ENCODE measurements at regions of chr12 and their contacts with region 1.

Region 1: DNA sequence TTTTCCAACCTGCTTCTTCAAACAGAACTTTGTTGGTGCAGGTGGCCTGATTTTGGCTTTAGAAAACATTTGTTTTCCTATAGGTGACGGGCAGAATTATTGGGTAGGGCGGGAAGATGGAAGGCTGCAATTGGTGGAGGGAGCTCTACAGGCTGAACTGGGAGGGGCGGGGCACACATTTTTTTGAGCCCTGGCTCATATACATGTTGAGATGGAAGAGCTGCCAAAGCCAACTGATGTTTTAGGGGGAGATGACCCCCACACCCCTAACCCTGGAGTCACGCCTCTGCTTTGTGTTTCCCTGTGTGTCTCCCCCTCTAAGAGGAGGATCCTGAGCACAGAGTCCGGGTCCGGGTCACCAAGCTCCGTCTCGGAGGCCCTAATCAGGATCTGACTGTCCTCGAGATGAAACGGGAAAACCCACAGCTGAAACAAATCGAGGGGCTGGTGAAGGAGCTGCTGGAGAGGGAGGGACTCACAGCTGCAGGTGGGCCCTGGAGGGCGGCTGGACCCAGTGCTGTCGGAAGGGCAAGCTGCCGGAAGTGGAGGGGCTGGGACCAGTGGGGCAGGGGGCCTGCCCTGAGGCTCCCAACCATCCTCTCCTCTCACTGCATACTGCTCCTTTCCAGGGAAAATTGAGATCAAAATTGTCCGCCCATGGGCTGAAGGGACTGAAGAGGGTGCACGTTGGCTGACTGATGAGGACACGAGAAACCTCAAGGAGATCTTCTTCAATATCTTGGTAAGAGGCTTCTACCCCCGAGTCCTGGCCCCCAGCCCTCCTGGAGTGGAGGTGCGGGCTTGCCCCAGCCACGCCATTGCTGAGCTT is 18.6 kb downstream of the AGAP2 start:
- DNase-seq: no peak
- ATAC-seq: no peak
- H3K4me3 ChIP-seq: no peak overlapping the region
- H3K4me3 Mint-ChIP-seq: no peak overlapping the region
- H3K27ac ChIP-seq: no peak overlapping the region
- H3K27ac Mint-ChIP-seq: peak overlapping the region; percentile 61
- H3K4me1 ChIP-seq: peaks cover 4% of the 10 kb centered on the region
- H3K4me1 Mint-ChIP-seq: peaks cover 25% of the 10 kb centered on the region
- H3K27me3 ChIP-seq: no peaks in the 10 kb centered on the region
- H3K27me3 Mint-ChIP-seq: no peaks in the 10 kb centered on the region
- CTCF ChIP-seq: no peak

Region 2: GRCh38 chr12:57735952-57736740 is 16.2 kb after region 1 on chr12:
- CTCF ChIA-PET with region 1: no interaction called
- POLR2A ChIA-PET with region 1: interaction called, 10 read pairs
- intact Hi-C with region 1: loop called in 1 of 2 experiments (anchors 2 kb)
- DNase-seq: no peak
- ATAC-seq: no peak
- H3K4me3 ChIP-seq: no peak overlapping the region
- H3K4me3 Mint-ChIP-seq: no peak overlapping the region
- H3K27ac ChIP-seq: peak overlapping the region in 1 of 2 donors; percentile 30
- H3K27ac Mint-ChIP-seq: peak overlapping the region; percentile 67
- H3K4me1 ChIP-seq: peaks cover 42% of the 10 kb centered on the region
- H3K4me1 Mint-ChIP-seq: peaks cover 42% of the 10 kb centered on the region
- H3K27me3 ChIP-seq: no peaks in the 10 kb centered on the region
- H3K27me3 Mint-ChIP-seq: no peaks in the 10 kb centered on the region
- CTCF ChIP-seq: no peak

Region 3: GRCh38 chr12:57810450-57810849 is 90.5 kb after region 1 on chr12:
- CTCF ChIA-PET with region 1: no interaction called
- POLR2A ChIA-PET with region 1: no interaction called
- intact Hi-C with region 1: no loop called
- DNase-seq: no peak
- ATAC-seq: no peak
- H3K4me3 ChIP-seq: no peak overlapping the region
- H3K4me3 Mint-ChIP-seq: no peak overlapping the region
- H3K27ac ChIP-seq: no peak overlapping the region
- H3K27ac Mint-ChIP-seq: no peak overlapping the region
- H3K4me1 ChIP-seq: no peaks in the 10 kb centered on the region
- H3K4me1 Mint-ChIP-seq: no peaks in the 10 kb centered on the region
- H3K27me3 ChIP-seq: no peaks in the 10 kb centered on the region
- H3K27me3 Mint-ChIP-seq: no peaks in the 10 kb centered on the region
- CTCF ChIP-seq: no peak

Measured in CD4-positive, alpha-beta T cell (primary cell).